ENCODE measurements at regions of chrX and their contacts with region 1.

Region 1: GRCh38 chrX:38985375-38985774 is 184.1 kb downstream of the MID1IP1 start:
- DNase-seq: peak in 3 of 9 experiments; percentile 3 to 50 (median 24)
- ATAC-seq: peak; percentile 23
- H3K4me3 ChIP-seq: no peak overlapping the region
- H3K4me3 Mint-ChIP-seq: no peak overlapping the region
- H3K27ac ChIP-seq: no peak overlapping the region
- H3K27ac Mint-ChIP-seq: no peak overlapping the region
- H3K4me1 ChIP-seq: no peaks in the 10 kb centered on the region
- H3K4me1 Mint-ChIP-seq: peaks cover 5% of the 10 kb centered on the region
- H3K27me3 ChIP-seq: no peaks in the 10 kb centered on the region
- H3K27me3 Mint-ChIP-seq: no peaks in the 10 kb centered on the region
- CTCF ChIP-seq: no peak

Region 2: GRCh38 chrX:38260231-38260630 is 725.1 kb before region 1 on chrX:
- CTCF ChIA-PET with region 1: no interaction called
- POLR2A ChIA-PET with region 1: no interaction called
- intact Hi-C with region 1: no loop called
- DNase-seq: peak in 1 of 9 experiments; percentile 1
- ATAC-seq: no peak
- H3K4me3 ChIP-seq: no peak overlapping the region
- H3K4me3 Mint-ChIP-seq: no peak overlapping the region
- H3K27ac ChIP-seq: no peak overlapping the region
- H3K27ac Mint-ChIP-seq: no peak overlapping the region
- H3K4me1 ChIP-seq: no peaks in the 10 kb centered on the region
- H3K4me1 Mint-ChIP-seq: no peaks in the 10 kb centered on the region
- H3K27me3 ChIP-seq: no peaks in the 10 kb centered on the region
- H3K27me3 Mint-ChIP-seq: no peaks in the 10 kb centered on the region
- CTCF ChIP-seq: no peak

Region 3: DNA sequence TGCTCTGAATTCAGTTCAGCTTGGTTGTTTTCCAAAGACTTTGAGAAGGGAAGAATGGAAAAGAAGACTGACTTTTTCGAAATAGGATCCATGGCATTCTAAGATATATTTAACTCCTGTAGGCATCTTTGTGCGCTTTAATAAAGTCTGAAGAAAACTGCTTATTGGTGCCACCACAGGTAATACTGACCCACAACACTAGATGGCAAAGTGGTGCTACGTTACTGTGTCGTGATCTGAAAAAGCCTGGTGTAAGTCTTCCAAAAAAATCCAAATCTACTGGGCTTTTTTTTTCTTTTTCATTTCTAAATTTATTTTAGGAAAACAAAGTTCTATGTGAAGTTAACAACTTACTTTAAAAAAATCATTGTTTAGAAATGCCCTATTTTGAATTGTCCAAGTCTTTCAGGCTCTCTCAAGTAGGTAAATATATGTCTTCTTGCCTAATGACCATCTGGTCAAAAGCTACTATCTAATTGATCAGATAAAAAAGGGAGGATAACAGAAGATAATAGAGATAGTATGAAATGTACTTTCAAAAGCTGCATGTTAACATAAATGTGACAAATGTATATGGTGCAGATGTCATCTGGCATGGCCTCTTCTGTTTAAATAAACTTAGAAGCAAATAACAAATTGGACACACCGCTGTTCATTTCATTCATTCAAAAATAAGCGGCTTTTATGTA is 231.1 kb before region 1 on chrX:
- CTCF ChIA-PET with region 1: interaction called, 7 read pairs
- POLR2A ChIA-PET with region 1: no interaction called
- intact Hi-C with region 1: loop called in 1 of 2 experiments (anchors 1 kb)
- DNase-seq: peak in 6 of 9 experiments; percentile 4 to 63 (median 17)
- ATAC-seq: no peak
- H3K4me3 ChIP-seq: no peak overlapping the region
- H3K4me3 Mint-ChIP-seq: no peak overlapping the region
- H3K27ac ChIP-seq: no peak overlapping the region
- H3K27ac Mint-ChIP-seq: no peak overlapping the region
- H3K4me1 ChIP-seq: no peaks in the 10 kb centered on the region
- H3K4me1 Mint-ChIP-seq: no peaks in the 10 kb centered on the region
- H3K27me3 ChIP-seq: no peaks in the 10 kb centered on the region
- H3K27me3 Mint-ChIP-seq: no peaks in the 10 kb centered on the region
- CTCF ChIP-seq: peak; percentile 61

Region 4: DNA sequence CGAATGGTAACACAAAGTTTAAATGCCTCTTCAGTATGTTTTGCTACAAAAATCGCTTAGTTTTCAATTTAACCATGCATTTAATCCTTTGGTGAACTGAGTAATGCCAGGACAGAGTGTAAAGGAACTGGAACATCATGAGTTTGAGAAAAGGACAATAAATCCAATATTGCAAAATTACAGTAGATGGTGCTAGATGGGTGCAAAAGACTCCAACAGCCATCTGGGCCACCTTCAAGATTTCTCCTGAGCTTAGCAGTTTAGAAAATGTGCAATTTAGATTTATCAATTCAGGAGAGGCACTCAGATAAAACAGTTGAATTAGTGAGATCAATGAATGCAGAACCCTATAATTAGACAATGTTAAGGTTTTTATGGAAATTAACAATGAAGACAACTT is 217.3 kb before region 1 on chrX:
- CTCF ChIA-PET with region 1: interaction called, 15 read pairs
- POLR2A ChIA-PET with region 1: no interaction called
- intact Hi-C with region 1: loop called (anchors 1 kb)
- DNase-seq: peak in 3 of 9 experiments; percentile 15 to 49 (median 37)
- ATAC-seq: no peak
- H3K4me3 ChIP-seq: no peak overlapping the region
- H3K4me3 Mint-ChIP-seq: no peak overlapping the region
- H3K27ac ChIP-seq: no peak overlapping the region
- H3K27ac Mint-ChIP-seq: no peak overlapping the region
- H3K4me1 ChIP-seq: no peaks in the 10 kb centered on the region
- H3K4me1 Mint-ChIP-seq: no peaks in the 10 kb centered on the region
- H3K27me3 ChIP-seq: no peaks in the 10 kb centered on the region
- H3K27me3 Mint-ChIP-seq: no peaks in the 10 kb centered on the region
- CTCF ChIP-seq: peak; percentile 37

Region 5: DNA sequence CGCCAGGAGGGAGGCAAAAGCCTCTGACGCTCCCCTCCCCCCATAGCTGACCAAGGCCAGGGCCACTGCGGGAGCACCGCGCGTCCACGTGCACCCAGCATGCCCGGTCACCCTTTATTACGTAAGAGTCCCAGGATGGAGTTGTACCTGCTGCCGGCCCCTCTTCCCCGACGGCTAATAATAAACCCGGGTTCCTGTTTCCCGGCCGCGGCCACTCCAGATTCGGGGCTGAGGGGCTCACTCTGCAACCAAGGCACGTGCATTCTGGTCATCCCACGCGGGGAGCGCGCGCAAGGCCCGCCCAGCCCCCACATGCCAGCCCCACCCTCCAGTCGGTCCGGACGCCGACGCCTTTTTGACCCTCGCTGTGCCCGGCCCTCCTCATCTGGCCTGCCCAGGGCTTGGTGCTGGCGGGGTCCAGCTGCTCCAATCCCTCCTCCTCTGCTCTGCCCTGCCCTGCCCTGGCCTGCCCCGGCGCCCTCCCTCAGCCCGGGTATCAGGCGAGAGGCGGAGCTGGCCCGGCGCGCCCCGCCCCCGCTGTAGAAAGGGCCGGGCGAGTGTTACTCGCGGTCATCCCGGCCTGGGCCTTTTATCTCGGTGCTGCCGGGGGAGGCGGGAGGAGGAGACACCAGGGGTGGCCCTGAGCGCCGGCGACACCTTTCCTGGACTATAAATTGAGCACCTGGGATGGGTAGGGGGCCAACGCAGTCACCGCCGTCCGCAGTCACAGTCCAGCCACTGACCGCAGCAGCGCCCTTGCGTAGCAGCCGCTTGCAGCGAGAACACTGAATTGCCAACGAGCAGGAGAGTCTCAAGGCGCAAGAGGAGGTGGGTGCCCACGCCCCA is 181.6 kb before region 1 on chrX:
- CTCF ChIA-PET with region 1: interaction called, 10 read pairs
- POLR2A ChIA-PET with region 1: interaction called, 3 read pairs
- intact Hi-C with region 1: loop called in 1 of 2 experiments (anchors 1 kb)
- DNase-seq: peak in 8 of 9 experiments; percentile 29 to 77 (median 54)
- ATAC-seq: peak; percentile 36
- H3K4me3 ChIP-seq: peak overlapping the region; percentile 80 to 84
- H3K4me3 Mint-ChIP-seq: peak overlapping the region; percentile 95
- H3K27ac ChIP-seq: peak overlapping the region; percentile 71 to 77
- H3K27ac Mint-ChIP-seq: peak overlapping the region; percentile 98
- H3K4me1 ChIP-seq: peaks cover 7% of the 10 kb centered on the region
- H3K4me1 Mint-ChIP-seq: peaks cover 32% of the 10 kb centered on the region
- H3K27me3 ChIP-seq: no peaks in the 10 kb centered on the region
- H3K27me3 Mint-ChIP-seq: no peaks in the 10 kb centered on the region
- CTCF ChIP-seq: no peak

Region 6: GRCh38 chrX:39149761-39150160 is 164.4 kb after region 1 on chrX:
- CTCF ChIA-PET with region 1: interaction called, 10 read pairs
- POLR2A ChIA-PET with region 1: no interaction called
- intact Hi-C with region 1: loop called in 1 of 2 experiments (anchors 10 kb)
- DNase-seq: peak; percentile 22 to 72 (median 54)
- ATAC-seq: no peak
- H3K4me3 ChIP-seq: no peak overlapping the region
- H3K4me3 Mint-ChIP-seq: no peak overlapping the region
- H3K27ac ChIP-seq: no peak overlapping the region
- H3K27ac Mint-ChIP-seq: no peak overlapping the region
- H3K4me1 ChIP-seq: no peaks in the 10 kb centered on the region
- H3K4me1 Mint-ChIP-seq: no peaks in the 10 kb centered on the region
- H3K27me3 ChIP-seq: no peaks in the 10 kb centered on the region
- H3K27me3 Mint-ChIP-seq: no peaks in the 10 kb centered on the region
- CTCF ChIP-seq: peak; percentile 54

Region 7: GRCh38 chrX:39242187-39242586 is 256.8 kb after region 1 on chrX:
- CTCF ChIA-PET with region 1: no interaction called
- POLR2A ChIA-PET with region 1: no interaction called
- intact Hi-C with region 1: loop called in 1 of 2 experiments (anchors 5 kb)
- DNase-seq: peak in 3 of 9 experiments; percentile 7 to 50 (median 36)
- ATAC-seq: no peak
- H3K4me3 ChIP-seq: no peak overlapping the region
- H3K4me3 Mint-ChIP-seq: no peak overlapping the region
- H3K27ac ChIP-seq: no peak overlapping the region
- H3K27ac Mint-ChIP-seq: no peak overlapping the region
- H3K4me1 ChIP-seq: no peaks in the 10 kb centered on the region
- H3K4me1 Mint-ChIP-seq: peaks cover 2% of the 10 kb centered on the region
- H3K27me3 ChIP-seq: no peaks in the 10 kb centered on the region
- H3K27me3 Mint-ChIP-seq: no peaks in the 10 kb centered on the region
- CTCF ChIP-seq: no peak